Mammary epithelial cell (primary cell): ENCODE measurements at regions of chr13 and their contacts with region 1.

Region 1: GRCh38 chr13:36875431-36875830 is 44.6 kb downstream of the SMAD9 start:
- DNase-seq: no peak
- H3K4me3 ChIP-seq: no peak overlapping the region
- H3K27ac ChIP-seq: no peak overlapping the region
- H3K4me1 ChIP-seq: no peaks in the 10 kb centered on the region
- H3K27me3 ChIP-seq: no peaks in the 10 kb centered on the region
- CTCF ChIP-seq: no peak

Region 2: GRCh38 chr13:36919833-36920615 is 44.6 kb after region 1 on chr13 and contains the start of gene SMAD9:
- CTCF ChIA-PET with region 1: no interaction called
- dilution Hi-C with region 1: loop called (anchors 5 kb)
- in situ Hi-C with region 1: no loop called
- intact Hi-C with region 1: no loop called
- DNase-seq: peak; percentile 30
- H3K4me3 ChIP-seq: peak within 1 kb of the TSS; percentile 54 to 60 (median 57)
- H3K27ac ChIP-seq: no peak within 1 kb of the TSS
- H3K4me1 ChIP-seq: peaks cover 7% of the 10 kb centered on the region
- H3K27me3 ChIP-seq: peaks cover 5% of the 10 kb centered on the region
- CTCF ChIP-seq: no peak
- total RNA-seq, gene SMAD9: 1.0 to 1.2 TPM